ENCODE measurements at regions of chrX and their contacts with region 1.

Region 1: DNA sequence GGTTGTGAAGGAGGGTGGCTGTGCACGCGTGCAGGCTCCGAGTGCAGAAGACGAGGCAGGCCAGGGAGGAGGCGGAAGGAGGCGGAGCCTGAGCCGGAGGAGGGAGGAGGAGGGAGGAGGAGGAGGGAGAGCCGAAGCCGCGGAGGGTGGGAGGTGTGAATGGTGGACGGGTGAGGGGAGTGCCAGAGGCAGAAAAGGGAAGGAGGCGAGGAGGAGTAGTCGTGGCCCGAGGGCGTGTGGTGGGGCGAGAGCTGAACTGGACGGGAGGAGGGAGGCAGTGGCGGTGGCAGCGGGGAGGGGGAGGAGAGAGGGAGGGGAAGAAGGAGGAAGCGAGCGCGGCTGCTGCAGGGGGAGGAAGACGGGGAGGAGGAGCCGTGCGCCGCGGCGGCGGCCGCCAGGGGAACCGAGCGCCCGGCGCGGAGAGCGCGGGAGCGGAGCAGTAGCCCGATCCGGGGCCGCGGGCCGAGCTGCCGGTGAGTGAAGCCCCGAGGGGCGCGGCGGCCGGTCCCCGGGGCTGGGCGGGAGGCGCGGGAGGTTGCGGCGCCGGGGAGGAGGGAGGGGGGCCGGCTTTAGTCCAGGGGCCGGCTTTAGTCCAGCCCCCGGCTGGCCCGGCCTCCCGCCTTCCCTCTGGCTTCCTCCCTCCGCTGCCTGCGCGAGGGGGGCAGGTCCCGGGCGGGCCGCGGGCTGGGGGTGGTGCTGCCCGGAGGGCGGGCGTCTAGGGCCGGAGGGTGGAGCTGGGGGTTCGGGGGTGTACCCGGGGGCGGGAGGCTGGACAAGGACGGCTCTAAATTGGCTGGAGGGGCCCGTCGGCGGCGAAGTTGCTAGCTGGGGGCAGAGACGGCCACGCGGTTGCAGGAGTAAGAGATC is at the start of gene TMEM164:
- DNase-seq: peak; percentile 59 to 89 (median 76)
- ATAC-seq: peak; percentile 82
- H3K4me3 ChIP-seq: peak within 1 kb of the TSS; percentile 81
- H3K4me3 Mint-ChIP-seq: peak within 1 kb of the TSS; percentile 97
- H3K27ac ChIP-seq: peak within 1 kb of the TSS in 1 of 2 donors; percentile 29
- H3K27ac Mint-ChIP-seq: peak within 1 kb of the TSS; percentile 84
- H3K4me1 ChIP-seq: peaks cover 27% of the 10 kb centered on the region
- H3K4me1 Mint-ChIP-seq: peaks cover 44% of the 10 kb centered on the region
- H3K27me3 ChIP-seq: no peaks in the 10 kb centered on the region
- H3K27me3 Mint-ChIP-seq: no peaks in the 10 kb centered on the region
- CTCF ChIP-seq: no peak
- total RNA-seq, gene TMEM164: 11.1 to 13.4 TPM

Region 2: DNA sequence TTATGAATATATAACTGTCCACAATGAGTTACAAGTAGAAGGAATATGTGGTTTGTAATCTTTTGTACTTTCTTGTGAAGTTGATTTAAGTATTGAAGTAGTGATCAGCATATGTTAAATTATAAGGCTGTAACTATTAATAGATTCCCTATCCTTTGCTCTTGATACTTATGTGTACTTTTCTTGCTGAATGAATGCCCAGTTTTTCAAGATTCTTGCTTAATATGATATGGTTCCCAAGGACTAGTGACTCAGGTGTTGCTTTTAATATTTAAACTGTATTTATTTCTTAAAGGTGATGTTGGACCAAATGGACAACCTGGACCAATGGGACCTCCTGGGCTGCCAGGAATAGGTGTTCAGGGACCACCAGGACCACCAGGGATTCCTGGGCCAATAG is 1387.9 kb before region 1 on chrX:
- CTCF ChIA-PET with region 1: no interaction called
- POLR2A ChIA-PET with region 1: no interaction called
- intact Hi-C with region 1: no loop called
- DNase-seq: no peak
- ATAC-seq: no peak
- H3K4me3 ChIP-seq: no peak overlapping the region
- H3K4me3 Mint-ChIP-seq: no peak overlapping the region
- H3K27ac ChIP-seq: no peak overlapping the region
- H3K27ac Mint-ChIP-seq: no peak overlapping the region
- H3K4me1 ChIP-seq: no peaks in the 10 kb centered on the region
- H3K4me1 Mint-ChIP-seq: no peaks in the 10 kb centered on the region
- H3K27me3 ChIP-seq: no peaks in the 10 kb centered on the region
- H3K27me3 Mint-ChIP-seq: no peaks in the 10 kb centered on the region
- CTCF ChIP-seq: no peak

Region 3: GRCh38 chrX:109536439-109537336 is 465.8 kb before region 1 on chrX and contains the start of gene NXT2:
- CTCF ChIA-PET with region 1: no interaction called
- POLR2A ChIA-PET with region 1: no interaction called
- intact Hi-C with region 1: loop called in 1 of 2 experiments (anchors 5 kb)
- DNase-seq: peak; percentile 68 to 94 (median 81)
- ATAC-seq: peak; percentile 98
- H3K4me3 ChIP-seq: peak within 1 kb of the TSS; percentile 79
- H3K4me3 Mint-ChIP-seq: peak within 1 kb of the TSS; percentile 84
- H3K27ac ChIP-seq: peak within 1 kb of the TSS; percentile 81 to 92
- H3K27ac Mint-ChIP-seq: peak within 1 kb of the TSS; percentile 88
- H3K4me1 ChIP-seq: peaks cover 2% of the 10 kb centered on the region
- H3K4me1 Mint-ChIP-seq: peaks cover 13% of the 10 kb centered on the region
- H3K27me3 ChIP-seq: peaks cover 2 to 3% of the 10 kb centered on the region in 2 experiments
- H3K27me3 Mint-ChIP-seq: peaks cover 26% of the 10 kb centered on the region
- CTCF ChIP-seq: no peak
- total RNA-seq, gene NXT2: 4.0 to 4.1 TPM

Region 4: DNA sequence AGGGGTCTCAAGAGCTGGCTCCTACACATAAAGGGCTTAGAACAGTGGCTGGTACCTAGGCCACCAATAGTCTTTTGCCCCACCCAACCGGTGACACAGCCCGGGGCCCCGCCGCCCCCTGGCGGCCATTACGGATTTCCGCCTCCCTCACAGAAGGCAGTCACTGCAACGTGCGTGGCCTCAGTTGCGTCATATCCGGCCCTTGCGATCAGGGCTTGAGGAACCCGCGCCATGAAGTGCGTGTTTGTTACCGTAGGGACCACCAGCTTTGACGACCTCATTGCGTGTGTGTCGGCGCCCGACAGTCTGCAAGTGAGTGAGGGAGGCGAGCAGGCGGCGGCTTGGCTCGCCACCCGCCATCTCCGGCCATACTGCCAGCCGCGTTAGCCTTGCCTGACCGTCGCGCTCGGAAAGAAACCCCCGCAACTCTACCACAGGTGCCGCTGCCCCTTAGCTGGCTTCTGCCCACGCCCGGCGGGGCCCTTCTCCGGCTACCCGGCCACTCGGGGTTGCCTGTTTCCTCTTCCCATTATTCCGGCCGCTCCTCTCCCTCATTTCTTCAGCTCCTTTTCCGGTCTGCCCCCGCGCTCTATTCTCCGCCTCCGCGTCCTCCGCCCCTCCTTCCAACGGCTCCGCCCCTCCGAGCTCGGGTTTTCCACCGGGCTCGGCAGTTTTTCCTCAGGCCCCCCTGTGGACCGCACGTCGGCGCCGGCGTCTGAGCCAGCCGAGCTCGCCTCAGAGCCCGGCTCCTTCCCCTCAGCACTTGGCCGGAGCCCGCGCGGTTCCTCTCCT is 1678.7 kb after region 1 on chrX and contains the start of gene ALG13:
- CTCF ChIA-PET with region 1: no interaction called
- POLR2A ChIA-PET with region 1: interaction called, 5 read pairs
- intact Hi-C with region 1: loop called in 1 of 2 experiments (anchors 5 kb)
- DNase-seq: peak; percentile 79 to 96 (median 85)
- ATAC-seq: peak; percentile 88
- H3K4me3 ChIP-seq: peak within 1 kb of the TSS; percentile 97
- H3K4me3 Mint-ChIP-seq: peak within 1 kb of the TSS; percentile 97
- H3K27ac ChIP-seq: peak within 1 kb of the TSS; percentile 95 to 100
- H3K27ac Mint-ChIP-seq: peak within 1 kb of the TSS; percentile 99
- H3K4me1 ChIP-seq: peaks cover 18% of the 10 kb centered on the region
- H3K4me1 Mint-ChIP-seq: peaks cover 48% of the 10 kb centered on the region
- H3K27me3 ChIP-seq: no peaks in the 10 kb centered on the region
- H3K27me3 Mint-ChIP-seq: no peaks in the 10 kb centered on the region
- CTCF ChIP-seq: peak; percentile 64
- total RNA-seq, gene ALG13: 82.2 to 86.2 TPM